Activated T-helper 1 cell treated with anti-CD3 and anti-CD28 coated beads, Interleukin-12 subunit alpha, Interleukin-12 subunit beta, Interleukin-2, Interleukin-4 antibody, amounts not matched to agents 30 ng/mL and 10 ng/mL and 1 ng/mL, durations not matched to agents 14 hours and 24 hours and 36 hours (primary cell): ENCODE measurements at regions of chr7 and their contacts with region 1.

Region 1: GRCh38 chr7:148884299-148885022 is 370 bp upstream of the EZH2 start:
- DNase-seq: peak; percentile 95
- H3K4me3 Mint-ChIP-seq: peak overlapping the region; percentile 93
- H3K27ac Mint-ChIP-seq: peak overlapping the region; percentile 98
- H3K4me1 Mint-ChIP-seq: peaks cover 43% of the 10 kb centered on the region
- H3K27me3 Mint-ChIP-seq: no peaks in the 10 kb centered on the region

Region 2: DNA sequence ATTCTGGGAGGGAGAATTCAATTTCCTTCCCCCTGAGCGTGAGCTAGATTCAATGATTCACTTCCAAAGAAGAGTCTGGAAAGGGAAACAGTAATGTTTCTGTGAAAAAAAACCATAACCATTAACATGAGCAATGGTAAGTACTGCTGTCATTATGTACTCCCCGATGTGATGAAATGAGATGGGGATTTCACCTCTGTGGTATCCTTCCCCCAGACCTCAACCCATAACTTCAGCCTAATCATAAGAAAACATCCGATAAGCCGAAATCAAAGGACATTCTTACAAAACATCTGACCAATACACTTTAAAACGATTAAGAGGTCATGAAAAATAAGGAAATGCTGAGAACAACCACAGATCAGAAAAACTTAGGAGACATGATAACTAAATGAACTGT is 27.6 kb before region 1 on chr7:
- intact Hi-C with region 1: loop called (anchors 1 kb)
- DNase-seq: no peak
- H3K4me3 Mint-ChIP-seq: peak overlapping the region; percentile 40
- H3K27ac Mint-ChIP-seq: peak overlapping the region; percentile 85
- H3K4me1 Mint-ChIP-seq: peaks cover 46% of the 10 kb centered on the region
- H3K27me3 Mint-ChIP-seq: no peaks in the 10 kb centered on the region

Region 3: DNA sequence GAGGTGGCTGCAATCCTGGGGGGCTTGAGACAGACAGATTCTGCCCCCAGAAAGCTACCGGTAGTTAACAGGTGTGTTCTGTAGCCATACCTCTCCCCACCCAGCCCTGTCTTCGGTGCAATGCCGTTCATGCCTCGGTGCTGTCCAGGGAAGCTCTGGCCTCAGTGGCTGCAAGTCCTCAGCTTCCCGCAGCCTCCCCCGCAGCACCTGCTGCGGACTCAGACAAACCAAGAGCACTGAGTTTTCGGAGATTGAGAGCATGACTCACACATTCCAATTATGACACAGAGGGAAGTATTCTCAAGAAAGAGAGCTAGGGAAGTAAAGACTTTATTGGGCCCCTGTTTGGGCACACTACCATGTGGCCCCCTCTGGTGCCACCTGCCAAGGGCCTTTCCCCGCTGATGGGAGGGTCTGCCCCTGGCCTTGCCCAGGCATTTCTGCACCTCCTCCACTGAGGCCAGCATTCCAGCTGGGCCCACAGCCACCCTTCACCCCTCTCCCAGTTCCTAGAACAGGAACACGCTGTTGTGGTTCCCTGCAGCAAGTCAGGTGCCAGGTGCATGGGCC is 29.8 kb after region 1 on chr7:
- intact Hi-C with region 1: loop called (anchors 1 kb)
- DNase-seq: peak; percentile 34
- H3K4me3 Mint-ChIP-seq: peak overlapping the region; percentile 77
- H3K27ac Mint-ChIP-seq: peak overlapping the region; percentile 94
- H3K4me1 Mint-ChIP-seq: peaks cover 63% of the 10 kb centered on the region
- H3K27me3 Mint-ChIP-seq: peaks cover 2% of the 10 kb centered on the region

Region 4: GRCh38 chr7:148921806-148922205 is 37.3 kb after region 1 on chr7:
- intact Hi-C with region 1: loop called (anchors 1 kb)
- DNase-seq: no peak
- H3K4me3 Mint-ChIP-seq: no peak overlapping the region
- H3K27ac Mint-ChIP-seq: no peak overlapping the region
- H3K4me1 Mint-ChIP-seq: peaks cover 30% of the 10 kb centered on the region
- H3K27me3 Mint-ChIP-seq: peaks cover 2% of the 10 kb centered on the region